Naive thymus-derived CD4-positive, alpha-beta T cell (primary cell): ENCODE measurements at regions of chr20 and their contacts with region 1.

Region 1: DNA sequence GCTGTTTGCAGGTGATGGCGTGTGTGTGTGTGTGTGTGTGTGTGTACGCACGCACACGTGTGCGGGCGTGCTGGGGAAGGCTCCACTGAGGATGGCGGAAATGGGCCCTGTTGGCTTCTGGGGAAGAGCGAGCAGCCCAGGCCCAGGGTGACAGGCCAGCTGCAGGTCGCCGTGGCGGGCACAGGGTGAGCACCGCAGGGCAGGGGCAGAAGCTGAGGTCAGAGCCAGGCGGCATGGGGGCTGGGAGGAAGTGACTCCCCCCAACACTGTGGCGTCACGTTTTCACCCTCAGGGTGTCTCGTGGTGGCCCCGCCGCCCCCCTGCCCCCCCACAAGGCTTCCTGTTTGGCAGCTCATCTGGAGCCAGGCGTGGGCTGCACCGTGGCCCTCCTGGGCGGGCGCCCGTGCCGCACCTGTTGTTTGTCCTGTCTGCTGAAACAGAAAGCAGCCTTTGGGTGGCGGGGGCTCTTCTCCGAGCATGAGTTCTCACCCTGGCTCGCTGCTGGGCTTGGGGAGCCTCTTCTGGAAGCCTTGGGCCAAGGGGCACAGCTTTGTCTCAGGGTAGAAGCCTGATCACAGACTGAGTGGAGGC is 7.1 kb downstream of the RBM38 start:
- DNase-seq: peak; percentile 67 to 94 (median 93)
- ATAC-seq: peak; percentile 87
- H3K4me3 ChIP-seq: peak overlapping the region; percentile 68
- H3K4me3 Mint-ChIP-seq: peak overlapping the region; percentile 82 to 96 (median 86)
- H3K27ac ChIP-seq: peak overlapping the region; percentile 83
- H3K27ac Mint-ChIP-seq: peak overlapping the region; percentile 92 to 100 (median 99)
- H3K4me1 ChIP-seq: peaks cover 90 to 98% of the 10 kb centered on the region in 2 donors
- H3K4me1 Mint-ChIP-seq: peaks cover 64 to 98% (median 94%) of the 10 kb centered on the region in 7 donors
- H3K27me3 ChIP-seq: no peaks in the 10 kb centered on the region
- H3K27me3 Mint-ChIP-seq: no peaks in the 10 kb centered on the region

Region 2: GRCh38 chr20:56411759-56412472 is 986.4 kb before region 1 on chr20 and contains the start of gene CASS4:
- CTCF ChIA-PET with region 1: no interaction called
- POLR2A ChIA-PET with region 1: interaction called, 3 read pairs
- intact Hi-C with region 1: loop called in 1 of 2 experiments (anchors 5 kb)
- DNase-seq: peak in 7 of 9 donors; percentile 65 to 83 (median 73)
- ATAC-seq: peak; percentile 91
- H3K4me3 ChIP-seq: peak within 1 kb of the TSS; percentile 71
- H3K4me3 Mint-ChIP-seq: peak within 1 kb of the TSS; percentile 88 to 97 (median 92)
- H3K27ac ChIP-seq: peak within 1 kb of the TSS; percentile 78
- H3K27ac Mint-ChIP-seq: peak within 1 kb of the TSS; percentile 89 to 99 (median 97)
- H3K4me1 ChIP-seq: peaks cover 26 to 32% of the 10 kb centered on the region in 2 donors
- H3K4me1 Mint-ChIP-seq: peaks cover 32 to 64% (median 61%) of the 10 kb centered on the region in 7 donors
- H3K27me3 ChIP-seq: no peaks in the 10 kb centered on the region
- H3K27me3 Mint-ChIP-seq: no peaks in the 10 kb centered on the region
- total RNA-seq, gene CASS4: 8.0 to 16.9 (median 14.3) TPM

Region 3: DNA sequence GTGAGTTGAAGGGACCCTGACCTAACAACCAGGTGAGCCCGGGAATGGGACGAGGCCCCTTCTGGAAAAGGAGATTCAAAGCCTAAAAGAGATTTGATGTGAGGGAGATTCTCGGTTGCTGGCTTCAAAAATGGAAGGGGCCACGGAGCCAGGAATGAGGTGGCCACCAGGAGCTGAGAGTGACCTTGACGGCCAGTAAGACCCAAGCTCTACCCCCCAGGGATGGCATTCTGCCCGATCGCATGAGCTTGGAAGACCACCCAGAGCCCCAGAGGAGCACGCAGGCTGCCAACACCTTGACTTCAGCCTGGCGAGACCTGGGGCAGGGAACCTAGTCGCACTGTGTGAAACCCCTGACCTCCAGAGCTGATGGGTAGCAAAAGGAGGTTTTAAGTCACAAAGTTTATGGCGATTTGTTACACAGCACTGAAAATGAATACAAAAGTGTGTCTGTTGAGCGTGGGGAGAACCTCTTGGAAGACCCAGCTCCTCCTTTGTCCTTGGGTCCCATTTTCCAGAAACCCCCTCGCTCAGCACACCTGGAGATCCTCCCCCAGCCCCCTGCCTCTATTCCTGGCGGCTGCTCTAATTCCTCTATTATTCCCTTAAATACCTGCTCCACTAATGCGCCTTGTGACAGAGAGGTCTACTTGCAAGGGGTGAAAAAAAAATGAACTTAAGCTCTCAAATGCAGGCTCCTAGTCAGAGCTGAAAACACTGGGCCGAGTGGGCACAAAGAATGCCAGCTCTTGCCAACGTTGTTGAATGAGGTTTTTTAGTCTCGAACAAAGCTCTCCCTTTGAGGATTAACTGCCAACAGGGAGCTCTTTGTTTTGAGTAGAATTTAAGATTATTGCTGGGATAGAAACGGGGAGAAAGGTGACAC is 295.5 kb before region 1 on chr20:
- CTCF ChIA-PET with region 1: no interaction called
- POLR2A ChIA-PET with region 1: no interaction called
- intact Hi-C with region 1: no loop called
- DNase-seq: no peak
- ATAC-seq: no peak
- H3K4me3 ChIP-seq: no peak overlapping the region
- H3K4me3 Mint-ChIP-seq: no peak overlapping the region
- H3K27ac ChIP-seq: no peak overlapping the region
- H3K27ac Mint-ChIP-seq: no peak overlapping the region
- H3K4me1 ChIP-seq: no peaks in the 10 kb centered on the region
- H3K4me1 Mint-ChIP-seq: peaks cover 0 to 4% (median 0%) of the 10 kb centered on the region in 7 donors
- H3K27me3 ChIP-seq: no peaks in the 10 kb centered on the region
- H3K27me3 Mint-ChIP-seq: peaks cover 0 to 32% (median 27%) of the 10 kb centered on the region in 5 donors

Region 4: DNA sequence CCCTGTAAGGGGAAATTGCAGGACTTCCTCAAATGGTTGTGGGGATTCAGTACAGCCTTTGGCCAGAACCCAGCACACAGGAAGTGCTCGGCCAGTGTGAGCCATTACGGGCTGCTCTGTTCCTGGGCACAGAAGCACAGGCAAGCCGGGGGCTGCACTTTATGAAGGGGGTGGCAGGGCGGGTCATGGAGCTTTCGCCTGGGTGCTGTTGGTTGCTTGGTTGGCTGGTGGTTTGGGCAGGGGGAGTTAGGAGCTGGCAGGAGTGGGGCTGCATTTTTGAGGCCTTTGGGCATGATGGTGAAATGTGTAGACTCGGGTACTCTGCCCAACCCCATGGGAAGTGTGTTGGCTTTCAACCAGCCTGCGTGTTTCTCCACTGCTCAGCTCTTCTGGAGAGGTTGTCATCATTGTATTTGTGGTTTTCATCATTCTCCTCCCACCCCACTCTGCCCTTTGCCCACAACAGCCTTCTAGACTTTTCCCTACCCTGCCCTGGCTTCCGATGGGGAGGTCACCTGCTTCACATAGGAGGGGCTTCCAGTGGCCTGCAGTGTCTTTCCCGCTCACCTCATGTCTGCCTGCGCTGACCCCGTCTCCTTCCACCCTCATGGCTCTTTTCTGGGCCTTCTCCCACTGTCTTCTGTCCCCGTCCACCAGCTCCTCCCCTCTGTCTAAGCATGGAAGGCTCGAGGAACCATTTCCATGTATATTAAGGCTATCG is 23.2 kb before region 1 on chr20:
- CTCF ChIA-PET with region 1: no interaction called
- POLR2A ChIA-PET with region 1: interaction called, 15 read pairs
- intact Hi-C with region 1: no loop called
- DNase-seq: no peak
- ATAC-seq: peak; percentile 91
- H3K4me3 ChIP-seq: no peak overlapping the region
- H3K4me3 Mint-ChIP-seq: peak overlapping the region in 4 of 10 donors; percentile 17 to 67 (median 36)
- H3K27ac ChIP-seq: peak overlapping the region; percentile 37
- H3K27ac Mint-ChIP-seq: peak overlapping the region in 8 of 9 donors; percentile 75 to 89 (median 83)
- H3K4me1 ChIP-seq: peaks cover 0 to 10% of the 10 kb centered on the region in 2 donors
- H3K4me1 Mint-ChIP-seq: peaks cover 10 to 35% (median 30%) of the 10 kb centered on the region in 7 donors
- H3K27me3 ChIP-seq: no peaks in the 10 kb centered on the region
- H3K27me3 Mint-ChIP-seq: no peaks in the 10 kb centered on the region

Region 5: DNA sequence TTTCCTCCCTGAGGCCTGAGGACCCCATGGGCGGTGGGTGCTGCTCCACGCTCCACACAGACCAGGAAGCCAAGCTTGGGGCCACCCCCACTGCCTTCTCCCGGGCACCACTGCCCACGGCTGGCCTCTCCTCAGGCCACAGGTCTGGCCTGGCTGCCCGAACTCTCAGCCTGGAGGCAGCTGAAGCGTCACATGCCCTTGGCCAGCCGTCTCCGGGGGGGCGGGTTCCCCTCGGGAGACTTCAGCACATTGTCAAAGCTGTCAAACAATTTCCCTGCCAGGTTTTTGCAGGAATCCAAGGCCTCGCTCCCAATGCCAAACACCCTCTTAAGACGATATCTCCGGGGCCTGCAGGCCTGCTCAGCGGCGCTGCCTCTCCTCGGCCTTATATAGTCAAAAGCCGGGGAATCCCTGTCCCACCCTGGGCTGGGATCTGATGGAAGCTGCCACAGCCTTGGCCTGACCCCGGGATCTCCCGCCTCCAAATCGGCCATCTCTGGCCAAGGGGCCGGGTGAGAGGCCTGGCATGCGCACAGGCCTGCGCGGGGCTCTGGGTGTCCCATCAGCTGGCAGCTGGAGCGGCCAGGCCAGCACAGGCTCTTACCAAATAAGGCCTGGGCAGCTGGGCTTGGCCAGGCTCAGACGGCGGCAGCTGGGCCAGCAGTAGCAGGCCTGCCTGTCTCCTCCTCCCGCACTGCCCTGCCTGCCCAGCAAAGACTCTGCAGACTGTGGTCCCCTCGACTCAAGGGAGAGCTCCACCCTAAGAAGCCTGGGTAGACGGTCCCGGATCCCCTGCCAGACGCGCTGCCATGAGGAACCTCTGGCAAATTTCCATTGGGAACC is 42.6 kb after region 1 on chr20:
- CTCF ChIA-PET with region 1: interaction called, 44 read pairs
- POLR2A ChIA-PET with region 1: interaction called, 120 read pairs
- intact Hi-C with region 1: no loop called
- DNase-seq: no peak
- ATAC-seq: no peak
- H3K4me3 ChIP-seq: no peak overlapping the region
- H3K4me3 Mint-ChIP-seq: no peak overlapping the region
- H3K27ac ChIP-seq: no peak overlapping the region
- H3K27ac Mint-ChIP-seq: no peak overlapping the region
- H3K4me1 ChIP-seq: no peaks in the 10 kb centered on the region
- H3K4me1 Mint-ChIP-seq: peaks cover 6 to 21% (median 15%) of the 10 kb centered on the region in 7 donors
- H3K27me3 ChIP-seq: no peaks in the 10 kb centered on the region
- H3K27me3 Mint-ChIP-seq: peaks cover 0 to 7% (median 0%) of the 10 kb centered on the region in 5 donors

Region 6: DNA sequence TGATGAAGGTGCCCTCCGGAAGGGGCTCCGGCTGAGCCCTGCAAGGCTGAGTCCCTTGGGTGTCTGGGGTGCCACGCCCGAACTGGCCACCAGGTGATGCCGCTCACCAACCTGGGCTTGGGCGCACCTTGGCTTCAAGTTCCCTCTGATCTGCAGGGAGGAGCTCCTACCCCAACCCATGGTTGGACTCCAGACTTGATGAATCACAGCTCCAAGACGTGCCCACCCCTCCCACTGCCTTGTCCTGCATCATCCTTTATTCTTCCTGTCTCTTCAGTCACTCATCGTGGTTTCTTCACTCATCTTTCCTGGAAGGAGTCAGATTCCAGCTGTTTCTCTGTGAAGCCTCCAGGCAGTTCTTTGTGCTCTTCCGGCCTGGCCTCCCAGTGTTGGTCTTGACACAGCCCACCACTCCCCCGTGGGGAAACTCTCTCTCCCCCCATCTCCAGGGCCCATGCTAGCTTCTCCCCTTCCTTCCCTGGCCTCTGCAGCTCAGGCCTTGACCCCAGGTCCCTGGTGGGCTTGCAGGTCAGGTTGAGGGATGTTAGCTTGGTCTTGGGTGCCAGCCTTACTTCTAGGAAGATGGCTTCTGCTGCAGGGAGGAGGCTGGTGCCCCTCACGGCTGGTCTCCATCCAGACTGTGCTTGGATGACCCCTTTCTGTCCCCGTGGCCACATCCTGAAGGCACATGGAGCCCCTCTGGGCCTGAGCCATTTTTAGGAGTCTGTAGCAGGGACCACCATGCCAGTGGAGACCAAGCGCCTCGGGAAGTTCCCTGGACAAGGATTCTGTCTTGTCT is 224.5 kb after region 1 on chr20:
- CTCF ChIA-PET with region 1: no interaction called
- POLR2A ChIA-PET with region 1: interaction called, 24 read pairs
- intact Hi-C with region 1: loop called in 1 of 2 experiments (anchors 2 kb)
- DNase-seq: peak in 8 of 9 donors; percentile 45 to 71 (median 66)
- ATAC-seq: peak; percentile 41
- H3K4me3 ChIP-seq: no peak overlapping the region
- H3K4me3 Mint-ChIP-seq: peak overlapping the region; percentile 10 to 89 (median 56)
- H3K27ac ChIP-seq: no peak overlapping the region
- H3K27ac Mint-ChIP-seq: peak overlapping the region; percentile 67 to 93 (median 84)
- H3K4me1 ChIP-seq: peaks cover 50 to 75% of the 10 kb centered on the region in 2 donors
- H3K4me1 Mint-ChIP-seq: peaks cover 48 to 98% (median 78%) of the 10 kb centered on the region in 7 donors
- H3K27me3 ChIP-seq: no peaks in the 10 kb centered on the region
- H3K27me3 Mint-ChIP-seq: peaks cover 0 to 20% (median 0%) of the 10 kb centered on the region in 5 donors

Region 7: GRCh38 chr20:59159493-59160376 is 1761.4 kb after region 1 on chr20:
- CTCF ChIA-PET with region 1: no interaction called
- POLR2A ChIA-PET with region 1: no interaction called
- intact Hi-C with region 1: loop called in 1 of 2 experiments (anchors 5 kb)
- DNase-seq: peak in 8 of 9 donors; percentile 50 to 86 (median 82)
- ATAC-seq: peak; percentile 93
- H3K4me3 ChIP-seq: peak overlapping the region; percentile 55
- H3K4me3 Mint-ChIP-seq: peak overlapping the region; percentile 76 to 93 (median 89)
- H3K27ac ChIP-seq: peak overlapping the region; percentile 93
- H3K27ac Mint-ChIP-seq: peak overlapping the region; percentile 95 to 99 (median 98)
- H3K4me1 ChIP-seq: peaks cover 55 to 79% of the 10 kb centered on the region in 2 donors
- H3K4me1 Mint-ChIP-seq: peaks cover 49 to 95% (median 89%) of the 10 kb centered on the region in 7 donors
- H3K27me3 ChIP-seq: no peaks in the 10 kb centered on the region
- H3K27me3 Mint-ChIP-seq: no peaks in the 10 kb centered on the region